K562 (cell line): ENCODE measurements at regions of chr5 and their contacts with region 1.

Region 1: DNA sequence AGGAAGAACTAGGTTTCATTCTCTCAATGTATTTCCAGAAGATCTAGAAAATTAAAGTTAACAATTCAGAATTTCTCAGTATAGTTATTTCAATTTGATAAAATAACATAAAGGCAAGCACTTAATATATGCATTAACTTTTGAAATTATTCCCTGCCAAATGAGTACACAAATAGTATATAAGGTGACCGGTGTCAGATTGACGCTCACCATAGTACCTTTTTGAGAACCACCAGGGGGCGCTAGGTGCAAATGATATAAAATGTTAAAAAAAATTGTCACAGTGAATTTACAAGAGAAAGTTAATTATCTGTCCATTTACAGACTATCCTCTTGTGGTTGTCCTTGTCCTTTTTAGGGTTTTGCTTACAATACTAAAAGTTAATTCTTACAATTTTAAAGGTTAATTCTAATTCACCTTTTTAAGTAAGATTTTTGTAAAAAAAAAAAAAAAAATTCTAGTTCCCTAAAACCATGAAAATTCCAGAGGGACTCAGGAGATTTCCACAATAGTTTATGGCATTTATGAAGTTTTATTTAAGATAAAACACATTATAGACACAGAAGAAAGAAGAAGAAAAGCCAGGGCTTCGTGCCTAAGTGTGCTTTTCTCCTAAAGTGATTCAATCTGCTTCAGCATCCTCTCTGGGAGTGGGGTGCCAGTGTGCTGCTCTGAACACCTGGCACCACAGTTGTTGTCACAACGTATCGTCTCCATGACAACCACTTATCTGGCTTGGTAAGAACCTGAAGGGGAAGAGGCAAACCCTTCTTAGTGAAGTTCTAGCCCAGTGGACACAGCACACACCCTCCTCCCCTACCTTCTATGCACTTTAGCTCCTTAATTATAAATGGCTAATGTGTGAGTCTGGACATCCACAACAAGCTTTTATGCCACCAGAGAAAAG is 1.7 kb downstream of the ADAMTS16 start:
- DNase-seq: peak; percentile 53 to 78 (median 62)
- ATAC-seq: peak; percentile 85
- H3K4me3 ChIP-seq: no peak overlapping the region
- H3K27ac ChIP-seq: no peak overlapping the region
- H3K4me1 ChIP-seq: peaks cover 0 to 6% of the 10 kb centered on the region in 2 experiments; a peak in 1 of 5 replicates
- H3K27me3 ChIP-seq: peaks cover 7 to 16% of the 10 kb centered on the region in 2 experiments; a peak in 4 of 5 replicates
- CTCF ChIP-seq: peak; percentile 48 to 87 (median 61); a peak in 5 of 6 replicates
- EP300 ChIP-seq: no peak
- POLR2A ChIP-seq: no peak
- RAD21 ChIP-seq: peak; percentile 82 to 89

Region 2: DNA sequence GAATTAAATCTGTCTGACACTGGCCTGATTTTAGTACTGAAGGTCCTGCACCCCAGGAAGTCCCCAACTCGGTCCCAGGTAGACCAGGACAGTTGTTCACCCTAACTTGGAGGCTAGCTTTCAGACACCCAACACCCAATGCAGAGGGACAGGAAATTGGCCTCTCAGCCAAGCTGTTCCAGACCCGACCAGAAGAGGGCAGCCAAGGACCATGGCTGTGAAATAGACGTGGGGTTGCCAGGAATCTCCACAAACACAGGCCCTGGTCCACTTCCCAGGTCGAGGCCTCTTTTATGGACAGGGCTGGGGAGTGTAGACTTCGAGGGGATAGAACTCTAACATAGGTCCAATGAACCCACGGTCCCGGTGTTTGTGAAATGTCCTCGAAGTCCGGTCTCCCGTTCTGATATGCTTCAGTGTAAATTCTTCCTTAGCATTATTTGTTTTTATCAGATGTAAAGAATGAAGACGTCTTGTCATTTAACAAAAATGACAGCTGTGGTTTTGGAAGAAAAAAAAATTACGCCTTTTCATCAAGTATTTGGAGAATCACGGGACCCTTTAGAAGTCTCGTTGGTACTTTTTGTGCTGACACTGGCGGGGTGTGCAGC is 262.1 kb before region 1 on chr5:
- CTCF ChIA-PET with region 1: no interaction called
- POLR2A ChIA-PET with region 1: no interaction called
- in situ Hi-C with region 1: no loop called
- intact Hi-C with region 1: loop called (anchors 5 kb)
- DNase-seq: peak; percentile 74 to 82 (median 78)
- ATAC-seq: peak; percentile 95
- H3K4me3 ChIP-seq: no peak overlapping the region
- H3K27ac ChIP-seq: no peak overlapping the region
- H3K4me1 ChIP-seq: peaks cover 0 to 3% of the 10 kb centered on the region in 2 experiments; a peak in 1 of 5 replicates
- H3K27me3 ChIP-seq: peaks cover 0 to 11% of the 10 kb centered on the region in 2 experiments; a peak in 2 of 5 replicates
- CTCF ChIP-seq: peak; percentile 88 to 98 (median 92)
- EP300 ChIP-seq: no peak
- POLR2A ChIP-seq: no peak
- RAD21 ChIP-seq: peak; percentile 86 to 94

Region 3: GRCh38 chr5:4953576-4953975 is 188.3 kb before region 1 on chr5:
- CTCF ChIA-PET with region 1: no interaction called
- POLR2A ChIA-PET with region 1: no interaction called
- in situ Hi-C with region 1: no loop called
- intact Hi-C with region 1: no loop called
- DNase-seq: no peak
- ATAC-seq: no peak
- H3K4me3 ChIP-seq: no peak overlapping the region
- H3K27ac ChIP-seq: no peak overlapping the region
- H3K4me1 ChIP-seq: no peaks in the 10 kb centered on the region
- H3K27me3 ChIP-seq: peaks cover 0 to 4% of the 10 kb centered on the region in 2 experiments; a peak in 2 of 5 replicates
- CTCF ChIP-seq: no peak
- EP300 ChIP-seq: no peak
- POLR2A ChIP-seq: no peak
- RAD21 ChIP-seq: no peak

Region 4: GRCh38 chr5:5398046-5398445 is 256.2 kb after region 1 on chr5:
- CTCF ChIA-PET with region 1: no interaction called
- POLR2A ChIA-PET with region 1: no interaction called
- in situ Hi-C with region 1: loop called (anchors 5 kb)
- intact Hi-C with region 1: loop called (anchors 1 kb)
- DNase-seq: no peak
- ATAC-seq: no peak
- H3K4me3 ChIP-seq: no peak overlapping the region
- H3K27ac ChIP-seq: no peak overlapping the region
- H3K4me1 ChIP-seq: no peaks in the 10 kb centered on the region
- H3K27me3 ChIP-seq: peaks cover 0 to 4% of the 10 kb centered on the region in 2 experiments; a peak in 2 of 5 replicates
- CTCF ChIP-seq: no peak
- EP300 ChIP-seq: no peak
- POLR2A ChIP-seq: no peak
- RAD21 ChIP-seq: no peak

Region 5: GRCh38 chr5:5404381-5404780 is 262.5 kb after region 1 on chr5:
- CTCF ChIA-PET with region 1: no interaction called
- POLR2A ChIA-PET with region 1: no interaction called
- in situ Hi-C with region 1: loop called (anchors 5 kb)
- intact Hi-C with region 1: no loop called
- DNase-seq: no peak
- ATAC-seq: no peak
- H3K4me3 ChIP-seq: no peak overlapping the region
- H3K27ac ChIP-seq: no peak overlapping the region
- H3K4me1 ChIP-seq: no peaks in the 10 kb centered on the region
- H3K27me3 ChIP-seq: peaks cover 0 to 8% of the 10 kb centered on the region in 2 experiments; a peak in 2 of 5 replicates
- CTCF ChIP-seq: no peak
- EP300 ChIP-seq: no peak
- POLR2A ChIP-seq: no peak
- RAD21 ChIP-seq: no peak